H1 (cell line): ENCODE measurements at regions of chr10 and their contacts with region 1.

Region 1: GRCh38 chr10:86836044-86836443 is 79.6 kb downstream of the BMPR1A start:
- DNase-seq: no peak
- H3K4me3 ChIP-seq: no peak overlapping the region
- H3K27ac ChIP-seq: no peak overlapping the region
- H3K4me1 ChIP-seq: peaks cover 0 to 18% (median 6%) of the 10 kb centered on the region in 4 experiments; a peak in 5 of 7 replicates
- H3K27me3 ChIP-seq: no peaks in the 10 kb centered on the region
- CTCF ChIP-seq: no peak
- EP300 ChIP-seq: no peak
- POLR2A ChIP-seq: no peak
- RAD21 ChIP-seq: no peak

Region 2: DNA sequence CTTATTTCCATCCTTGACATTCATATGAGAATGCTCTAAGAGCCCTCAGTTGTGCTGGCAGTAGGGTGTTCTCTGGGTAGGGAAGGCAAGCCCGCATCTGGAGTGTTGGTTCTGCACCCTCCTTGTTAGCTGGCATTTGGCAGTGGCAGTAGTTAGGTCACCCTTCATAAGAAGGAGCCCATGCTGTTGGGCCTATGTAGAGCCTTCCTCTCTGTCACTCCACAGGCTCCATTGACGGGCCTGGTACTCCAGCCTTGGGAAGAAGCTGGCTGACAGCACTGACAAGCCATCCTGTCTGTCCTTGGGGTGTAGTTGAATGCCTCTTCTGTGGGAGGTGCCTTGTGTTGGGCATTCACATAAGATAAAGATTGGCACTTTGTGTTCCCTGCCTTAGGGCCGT is 10.0 kb after region 1 on chr10:
- CTCF ChIA-PET with region 1: interaction called, 4 read pairs
- POLR2A ChIA-PET with region 1: interaction called, 11 read pairs
- DNase-seq: no peak
- H3K4me3 ChIP-seq: no peak overlapping the region
- H3K27ac ChIP-seq: no peak overlapping the region
- H3K4me1 ChIP-seq: peaks cover 4 to 9% (median 8%) of the 10 kb centered on the region in 4 experiments; a peak in 6 of 7 replicates
- H3K27me3 ChIP-seq: no peaks in the 10 kb centered on the region
- CTCF ChIP-seq: no peak
- EP300 ChIP-seq: no peak
- POLR2A ChIP-seq: no peak
- RAD21 ChIP-seq: no peak

Region 3: GRCh38 chr10:86857128-86857721 is 21.2 kb after region 1 on chr10:
- CTCF ChIA-PET with region 1: interaction called, 3 read pairs
- POLR2A ChIA-PET with region 1: interaction called, 11 read pairs
- DNase-seq: no peak
- H3K4me3 ChIP-seq: peak overlapping the region in 1 of 4 experiments; percentile 2; a peak in 1 of 8 replicates
- H3K27ac ChIP-seq: peak overlapping the region; percentile 70; the same call in 1 of the 2 replicates
- H3K4me1 ChIP-seq: peaks cover 6 to 26% (median 20%) of the 10 kb centered on the region in 4 experiments; a peak in 6 of 7 replicates
- H3K27me3 ChIP-seq: no peaks in the 10 kb centered on the region
- CTCF ChIP-seq: no peak
- EP300 ChIP-seq: no peak
- POLR2A ChIP-seq: peak in 1 of 2 experiments; percentile 33; a peak in 1 of 3 replicates
- RAD21 ChIP-seq: no peak

Region 4: GRCh38 chr10:86931872-86932271 is 95.8 kb after region 1 on chr10:
- CTCF ChIA-PET with region 1: no interaction called
- POLR2A ChIA-PET with region 1: no interaction called
- DNase-seq: no peak
- H3K4me3 ChIP-seq: no peak overlapping the region
- H3K27ac ChIP-seq: no peak overlapping the region
- H3K4me1 ChIP-seq: no peaks in the 10 kb centered on the region
- H3K27me3 ChIP-seq: no peaks in the 10 kb centered on the region
- CTCF ChIP-seq: no peak
- EP300 ChIP-seq: no peak
- POLR2A ChIP-seq: no peak
- RAD21 ChIP-seq: no peak